ENCODE measurements at regions of chr9 and their contacts with region 1.

Region 1: GRCh38 chr9:134024828-134025605 is at the start of gene BRD3OS:
- DNase-seq: peak; percentile 96 to 99 (median 98)
- H3K4me3 ChIP-seq: peak within 1 kb of the TSS in 3 of 4 donors; percentile 46 to 93 (median 66)
- H3K27ac ChIP-seq: peak within 1 kb of the TSS in 2 of 5 donors; percentile 66 to 74
- H3K4me1 ChIP-seq: peaks cover 6 to 15% of the 10 kb centered on the region in 2 donors
- H3K27me3 ChIP-seq: no peaks in the 10 kb centered on the region
- CTCF ChIP-seq: no peak
- POLR2A ChIP-seq: peak in 1 of 2 donors; percentile 18
- total RNA-seq, gene BRD3OS: 14.7 to 70.6 (median 25.5) TPM

Region 2: DNA sequence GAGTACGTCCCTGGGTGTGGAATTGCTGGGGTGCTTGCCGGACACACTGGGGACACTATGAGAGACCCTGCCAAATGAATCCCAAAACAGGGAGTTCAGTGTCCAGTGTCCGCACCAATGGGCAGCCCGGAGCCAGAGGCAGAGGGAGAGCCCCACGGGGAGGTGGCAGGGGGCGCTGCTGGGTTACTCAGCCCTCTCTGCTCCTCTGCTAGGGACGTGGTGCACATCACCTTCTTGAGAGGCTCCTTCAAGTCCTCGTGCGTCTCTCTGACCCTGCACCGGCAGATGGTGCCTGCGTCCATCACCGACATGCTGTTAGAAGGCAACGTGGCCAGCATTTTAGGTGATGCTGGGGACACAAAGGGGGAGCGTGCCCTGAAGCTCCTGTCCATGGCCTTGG is 628.1 kb before region 1 on chr9:
- intact Hi-C with region 1: no loop called
- DNase-seq: peak in 1 of 7 donors; percentile 39
- H3K4me3 ChIP-seq: no peak overlapping the region
- H3K27ac ChIP-seq: no peak overlapping the region
- H3K4me1 ChIP-seq: no peaks in the 10 kb centered on the region
- H3K27me3 ChIP-seq: peaks cover 7% of the 10 kb centered on the region
- CTCF ChIP-seq: peak in 2 of 6 experiments; percentile 9 to 13
- POLR2A ChIP-seq: no peak

Region 3: DNA sequence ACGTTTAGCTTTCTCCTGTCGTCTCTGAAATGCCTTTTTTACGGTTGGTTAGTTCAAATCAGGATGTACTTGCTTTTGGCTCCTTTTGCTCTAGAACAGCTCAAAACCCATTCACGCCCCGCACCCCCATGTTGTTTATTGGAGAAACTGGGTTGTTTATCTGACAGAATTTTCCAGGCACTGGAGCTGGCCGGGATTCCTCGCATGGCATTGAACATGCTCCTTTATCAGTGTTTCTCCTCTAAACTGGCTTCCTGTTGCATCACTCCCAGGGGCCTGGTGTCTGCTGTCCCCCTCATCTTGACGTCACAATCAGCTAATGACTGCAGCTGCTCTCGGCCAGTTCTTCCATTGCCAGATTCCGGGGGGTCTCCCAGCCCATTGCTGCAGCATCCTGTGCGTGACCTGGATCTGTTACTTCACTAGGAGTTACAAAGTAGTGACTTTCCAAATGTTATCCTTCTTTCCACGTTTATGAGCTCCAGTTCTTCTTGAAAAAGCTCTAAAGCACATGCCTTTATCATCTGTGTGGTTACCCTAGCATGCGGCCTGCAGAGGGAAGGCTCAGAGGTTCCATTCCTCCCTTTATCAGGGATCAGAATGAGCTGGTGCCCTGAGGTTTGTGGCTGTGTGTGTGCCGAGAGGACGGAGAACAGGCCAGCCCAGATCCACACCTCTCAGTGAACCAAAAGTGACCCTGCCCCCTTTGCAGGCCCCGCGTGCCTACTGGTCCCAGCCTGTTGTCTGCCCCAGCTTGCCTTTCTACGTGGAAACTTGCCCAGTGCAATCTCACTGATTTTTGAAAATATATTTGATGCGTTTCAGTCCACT is 443.3 kb before region 1 on chr9:
- intact Hi-C with region 1: no loop called
- DNase-seq: peak in 5 of 7 donors; percentile 43 to 82 (median 61)
- H3K4me3 ChIP-seq: no peak overlapping the region
- H3K27ac ChIP-seq: peak overlapping the region in 3 of 5 donors; percentile 39 to 84 (median 62)
- H3K4me1 ChIP-seq: no peaks in the 10 kb centered on the region
- H3K27me3 ChIP-seq: peaks cover 16% of the 10 kb centered on the region
- CTCF ChIP-seq: no peak
- POLR2A ChIP-seq: no peak

Region 4: DNA sequence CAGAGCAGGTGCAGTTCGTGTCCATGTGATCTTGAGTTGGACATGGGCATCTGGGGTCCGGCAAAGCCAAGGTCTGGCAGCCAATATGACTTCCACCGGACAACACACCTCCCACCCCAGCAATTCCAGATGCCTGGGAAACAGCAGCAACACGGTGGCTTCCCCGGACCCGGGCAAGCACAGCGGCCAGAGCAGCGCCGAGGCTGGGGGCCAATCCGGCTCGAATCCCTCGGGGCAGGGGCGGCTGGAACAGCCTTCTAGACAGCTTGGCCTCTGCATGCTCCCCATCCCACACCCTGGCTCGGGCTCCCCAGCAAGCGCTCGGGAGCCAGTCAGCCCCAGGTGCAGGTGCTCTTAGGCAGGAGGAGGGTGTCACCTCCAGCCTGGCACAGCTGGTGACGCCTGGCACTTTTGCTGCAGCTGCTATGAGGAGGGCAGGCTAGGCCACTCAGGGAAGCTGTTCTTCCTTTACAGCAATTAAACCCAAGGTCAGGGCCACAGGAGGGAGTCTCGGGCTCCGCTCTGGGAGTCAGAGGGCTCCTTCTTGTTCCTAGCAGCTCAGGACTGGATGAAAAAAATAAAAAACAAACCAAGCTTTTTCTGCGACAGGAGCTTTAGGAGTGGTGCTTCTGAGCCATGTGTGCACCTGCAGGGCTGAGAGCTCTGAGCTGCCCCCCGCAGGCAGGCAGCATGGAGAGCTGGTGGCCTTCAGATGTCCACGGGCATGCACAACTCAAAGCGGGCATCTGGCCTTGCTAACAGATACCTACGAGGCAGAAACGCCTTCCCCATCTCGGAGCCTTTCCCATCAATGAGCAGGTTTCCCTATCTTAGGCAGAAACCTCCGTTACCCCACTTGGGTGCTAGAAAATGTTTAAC is 360.6 kb before region 1 on chr9:
- intact Hi-C with region 1: no loop called
- DNase-seq: no peak
- H3K4me3 ChIP-seq: no peak overlapping the region
- H3K27ac ChIP-seq: no peak overlapping the region
- H3K4me1 ChIP-seq: no peaks in the 10 kb centered on the region
- H3K27me3 ChIP-seq: no peaks in the 10 kb centered on the region
- CTCF ChIP-seq: no peak
- POLR2A ChIP-seq: no peak

Region 5: DNA sequence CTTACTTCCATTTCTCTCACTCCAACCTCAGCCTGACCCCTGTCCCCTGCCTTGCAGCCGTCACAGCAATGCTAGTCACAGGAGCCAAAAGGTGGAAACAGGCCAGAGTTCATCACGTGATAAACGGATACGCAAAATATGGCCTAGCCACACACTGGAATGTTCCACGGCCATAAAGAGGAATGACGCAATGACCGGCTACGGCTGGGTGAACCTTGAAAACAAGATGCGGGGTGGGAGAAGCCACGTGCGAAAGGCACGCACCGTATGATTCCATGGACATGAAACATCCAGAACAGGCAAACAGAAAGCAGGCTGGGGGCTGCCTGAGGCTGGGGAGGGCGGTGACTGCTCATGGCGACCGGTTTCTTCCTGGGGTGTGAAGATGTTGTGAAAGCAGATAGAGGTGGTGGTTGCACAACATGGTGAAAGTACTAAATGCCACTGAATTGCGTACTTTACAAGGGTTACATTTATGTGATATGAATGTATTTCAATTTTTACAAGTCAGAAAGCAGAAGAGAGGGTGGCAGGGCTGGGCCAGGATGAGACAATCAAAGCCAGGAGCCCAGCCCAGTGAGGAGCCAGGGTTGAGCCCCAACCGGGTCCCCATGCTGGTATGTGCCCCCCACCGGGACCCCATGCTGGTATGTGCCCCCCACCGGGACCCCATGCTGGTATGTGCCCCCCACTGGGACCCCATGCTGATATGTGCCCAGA is 169.1 kb before region 1 on chr9:
- intact Hi-C with region 1: no loop called
- DNase-seq: peak; percentile 70 to 96 (median 86)
- H3K4me3 ChIP-seq: no peak overlapping the region
- H3K27ac ChIP-seq: peak overlapping the region; percentile 59 to 95 (median 79)
- H3K4me1 ChIP-seq: peaks cover 13 to 18% of the 10 kb centered on the region in 2 donors
- H3K27me3 ChIP-seq: no peaks in the 10 kb centered on the region
- CTCF ChIP-seq: no peak
- POLR2A ChIP-seq: no peak

Region 6: GRCh38 chr9:134059661-134060395 is 34.8 kb after region 1 on chr9:
- intact Hi-C with region 1: loop called (anchors 5 kb)
- DNase-seq: peak in 6 of 7 donors; percentile 33 to 61 (median 49)
- H3K4me3 ChIP-seq: no peak overlapping the region
- H3K27ac ChIP-seq: peak overlapping the region in 1 of 5 donors; percentile 83
- H3K4me1 ChIP-seq: peaks cover 77 to 93% of the 10 kb centered on the region in 2 donors
- H3K27me3 ChIP-seq: no peaks in the 10 kb centered on the region
- CTCF ChIP-seq: no peak
- POLR2A ChIP-seq: no peak

Region 7: GRCh38 chr9:134067904-134068743 is 43.1 kb after region 1 on chr9 and contains the start of gene BRD3:
- intact Hi-C with region 1: loop called (anchors 5 kb)
- DNase-seq: peak; percentile 79 to 90 (median 83)
- H3K4me3 ChIP-seq: peak within 1 kb of the TSS; percentile 7 to 98 (median 48)
- H3K27ac ChIP-seq: peak within 1 kb of the TSS; percentile 72 to 98 (median 92)
- H3K4me1 ChIP-seq: peaks cover 25 to 35% of the 10 kb centered on the region in 2 donors
- H3K27me3 ChIP-seq: no peaks in the 10 kb centered on the region
- CTCF ChIP-seq: no peak
- POLR2A ChIP-seq: peak; percentile 78 to 90
- total RNA-seq, gene BRD3: 13.7 to 73.1 (median 23.6) TPM

Measured in adrenal gland (tissue), 19 donors.